ENCODE measurements at regions of chr6 and their contacts with region 1.

Region 1: GRCh38 chr6:12546410-12547002 is 170.1 kb upstream of the PHACTR1 start:
- DNase-seq: no peak
- ATAC-seq: no peak
- H3K4me3 ChIP-seq: no peak overlapping the region
- H3K27ac ChIP-seq: no peak overlapping the region
- H3K4me1 ChIP-seq: peaks cover 3 to 10% of the 10 kb centered on the region in 2 experiments; a peak in 3 of 4 replicates
- H3K27me3 ChIP-seq: no peaks in the 10 kb centered on the region
- CTCF ChIP-seq: no peak
- POLR2A ChIP-seq: no peak
- RAD21 ChIP-seq: no peak

Region 2: DNA sequence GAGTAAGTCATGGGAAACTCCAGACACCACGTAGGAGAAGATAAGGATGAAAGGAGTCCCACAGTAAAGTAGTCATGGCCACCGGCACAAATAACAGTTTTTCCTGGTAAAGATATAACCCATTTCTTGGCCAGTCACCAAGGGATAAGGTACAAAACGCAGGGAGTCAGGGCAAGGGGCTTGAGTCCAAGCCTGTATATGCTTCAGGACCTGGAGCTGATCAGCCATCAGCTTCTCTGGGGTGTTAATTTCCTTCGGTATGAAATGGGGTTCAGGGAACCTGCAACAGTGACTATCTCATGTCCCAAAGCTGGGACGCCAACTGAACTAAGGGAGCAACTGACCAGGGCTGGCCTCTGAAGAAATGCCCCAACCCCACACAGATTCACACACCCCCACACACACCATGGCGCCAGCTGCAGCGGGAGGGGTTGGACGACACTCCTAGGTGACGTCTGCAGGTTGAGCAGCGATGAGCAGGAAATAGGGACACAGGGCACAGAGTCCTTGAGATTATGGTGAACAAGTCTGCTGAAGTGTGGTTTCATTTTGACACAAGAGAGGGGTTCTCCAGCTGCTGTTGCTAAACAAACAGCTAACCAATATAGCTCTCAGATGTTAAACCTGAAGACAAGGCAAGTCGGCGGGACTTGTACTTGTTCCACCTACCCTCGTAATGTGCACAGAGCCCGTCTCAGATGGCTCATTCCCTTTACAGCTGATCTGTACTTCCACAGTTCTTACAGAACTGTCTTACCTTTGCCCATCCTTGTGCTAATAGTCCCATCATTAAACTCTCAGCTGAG is 760.5 kb before region 1 on chr6:
- CTCF ChIA-PET with region 1: no interaction called
- POLR2A ChIA-PET with region 1: no interaction called
- RAD21 ChIA-PET with region 1: no interaction called
- intact Hi-C with region 1: no loop called
- DNase-seq: no peak
- ATAC-seq: no peak
- H3K4me3 ChIP-seq: no peak overlapping the region
- H3K27ac ChIP-seq: no peak overlapping the region
- H3K4me1 ChIP-seq: no peaks in the 10 kb centered on the region
- H3K27me3 ChIP-seq: peaks cover 3% of the 10 kb centered on the region; the same call in 1 of the 2 replicates
- CTCF ChIP-seq: no peak
- POLR2A ChIP-seq: no peak
- RAD21 ChIP-seq: no peak

Region 3: GRCh38 chr6:12516070-12516469 is 30.4 kb before region 1 on chr6:
- CTCF ChIA-PET with region 1: no interaction called
- POLR2A ChIA-PET with region 1: no interaction called
- RAD21 ChIA-PET with region 1: no interaction called
- intact Hi-C with region 1: loop called (anchors 1 kb)
- DNase-seq: no peak
- ATAC-seq: no peak; the same call in 1 of the 2 replicates
- H3K4me3 ChIP-seq: no peak overlapping the region
- H3K27ac ChIP-seq: no peak overlapping the region
- H3K4me1 ChIP-seq: no peaks in the 10 kb centered on the region
- H3K27me3 ChIP-seq: no peaks in the 10 kb centered on the region
- CTCF ChIP-seq: no peak
- POLR2A ChIP-seq: no peak
- RAD21 ChIP-seq: no peak

Region 4: GRCh38 chr6:12785301-12785700 is 238.8 kb after region 1 on chr6:
- CTCF ChIA-PET with region 1: no interaction called
- POLR2A ChIA-PET with region 1: no interaction called
- RAD21 ChIA-PET with region 1: no interaction called
- intact Hi-C with region 1: no loop called
- DNase-seq: no peak
- ATAC-seq: no peak
- H3K4me3 ChIP-seq: no peak overlapping the region
- H3K27ac ChIP-seq: no peak overlapping the region
- H3K4me1 ChIP-seq: no peaks in the 10 kb centered on the region
- H3K27me3 ChIP-seq: peaks cover 10% of the 10 kb centered on the region; the same call in 1 of the 2 replicates
- CTCF ChIP-seq: no peak
- POLR2A ChIP-seq: no peak
- RAD21 ChIP-seq: no peak

Region 5: DNA sequence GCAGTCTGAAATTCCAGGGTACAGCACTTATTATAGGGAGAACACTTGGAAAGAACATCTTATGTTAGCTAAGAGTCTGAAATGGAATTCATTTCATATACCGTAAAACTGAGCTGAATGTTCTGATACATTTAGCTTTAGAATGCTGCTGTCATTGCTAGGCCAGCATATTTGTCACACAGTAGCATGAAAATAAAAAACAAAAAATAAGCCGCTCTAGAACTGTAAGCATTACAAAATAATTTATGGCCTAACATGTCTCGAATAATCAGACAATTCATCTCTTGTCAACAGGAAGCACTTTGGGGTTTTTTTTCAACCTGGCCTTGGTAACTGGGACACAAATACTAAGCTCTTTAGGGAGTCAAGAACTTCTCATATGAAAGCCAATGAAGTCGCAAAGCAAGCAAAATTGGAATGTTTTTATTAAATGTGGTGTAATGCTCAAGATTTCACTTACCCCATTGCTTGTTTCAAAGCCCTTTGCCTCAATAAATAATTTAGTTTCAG is 285.8 kb after region 1 on chr6:
- CTCF ChIA-PET with region 1: no interaction called
- POLR2A ChIA-PET with region 1: no interaction called
- RAD21 ChIA-PET with region 1: no interaction called
- intact Hi-C with region 1: no loop called
- DNase-seq: no peak
- ATAC-seq: no peak
- H3K4me3 ChIP-seq: no peak overlapping the region
- H3K27ac ChIP-seq: no peak overlapping the region
- H3K4me1 ChIP-seq: no peaks in the 10 kb centered on the region
- H3K27me3 ChIP-seq: peaks cover 14% of the 10 kb centered on the region; the same call in 1 of the 2 replicates
- CTCF ChIP-seq: no peak
- POLR2A ChIP-seq: no peak
- RAD21 ChIP-seq: no peak